Lower leg skin (tissue), 4 donors: ENCODE measurements at regions of chr5 and their contacts with region 1.

Region 1: GRCh38 chr5:13529300-13529699 is 415.2 kb downstream of the DNAH5 start:
- DNase-seq: no peak
- H3K4me3 ChIP-seq: no peak overlapping the region
- CTCF ChIP-seq: no peak
- POLR2A ChIP-seq: no peak

Region 2: GRCh38 chr5:13574574-13574973 is 45.3 kb after region 1 on chr5:
- intact Hi-C with region 1: loop called (anchors 1 kb)
- DNase-seq: no peak
- H3K4me3 ChIP-seq: no peak overlapping the region
- CTCF ChIP-seq: no peak
- POLR2A ChIP-seq: no peak